A549 (cell line): ENCODE measurements at regions of chr10 and their contacts with region 1.

Region 1: DNA sequence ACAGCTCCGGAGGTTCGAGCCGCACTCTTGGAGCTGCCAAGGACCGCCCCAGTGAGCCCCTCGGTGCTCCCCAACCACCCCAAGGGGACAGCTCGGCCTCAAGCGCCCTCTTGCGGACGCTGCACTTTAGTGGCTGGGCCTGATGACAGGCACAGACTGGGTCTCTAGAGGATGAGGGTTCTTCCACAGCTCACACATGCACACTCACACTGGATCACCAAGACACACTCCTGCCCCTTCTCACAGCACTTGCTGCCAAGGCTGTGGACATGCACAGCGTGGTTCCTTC is 2.1 kb downstream of the RET start:
- DNase-seq: peak; percentile 41 to 57
- ATAC-seq: peak; percentile 25 to 70; a peak in 3 of 6 replicates
- H3K4me3 ChIP-seq: no peak overlapping the region
- H3K27ac ChIP-seq: no peak overlapping the region
- H3K4me1 ChIP-seq: 0 out of 3 replicates have a peak, but pooled peaks cover 3% of the 10 kb centered on the region
- CTCF ChIP-seq: peak; percentile 47
- EP300 ChIP-seq: no peak
- POLR2A ChIP-seq: no peak
- RAD21 ChIP-seq: peak; percentile 47 to 57; a peak in 4 of 5 replicates

Region 2: DNA sequence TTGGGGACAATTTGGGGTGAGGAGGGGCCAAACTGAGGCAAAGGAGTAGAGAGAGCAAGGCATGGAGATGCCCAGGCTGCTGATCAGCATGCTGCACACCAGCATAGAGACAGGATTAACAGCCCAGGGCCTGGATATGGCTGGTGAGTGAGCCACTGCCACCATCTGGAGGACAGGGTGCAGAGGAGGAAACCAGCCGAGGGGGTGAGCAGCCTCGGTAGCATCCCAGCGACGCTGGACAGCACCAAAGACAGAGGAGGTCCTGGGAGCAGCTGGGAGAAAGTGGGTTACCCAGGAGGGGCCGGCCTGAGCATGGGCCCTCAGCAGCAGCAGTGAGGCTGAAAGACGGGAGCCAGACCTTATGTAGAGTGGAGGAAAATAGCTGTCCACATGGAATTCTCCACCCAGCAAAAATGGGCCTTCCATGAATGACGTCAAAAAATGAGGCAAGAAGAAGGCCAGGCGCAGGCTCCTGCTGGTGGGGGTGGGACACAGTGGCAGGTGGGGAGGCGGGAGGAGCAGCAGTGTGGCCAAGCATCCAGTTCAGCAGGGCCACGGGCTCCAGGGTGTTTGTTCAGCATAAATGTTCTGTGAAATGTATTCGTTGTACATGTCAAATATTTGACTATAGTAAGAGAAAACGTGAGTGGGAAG is 14.6 kb after region 1 on chr10:
- CTCF ChIA-PET with region 1: interaction called, 17 read pairs
- POLR2A ChIA-PET with region 1: no interaction called
- DNase-seq: peak in 1 of 2 experiments; percentile 24
- ATAC-seq: peak; percentile 77 to 80
- H3K4me3 ChIP-seq: no peak overlapping the region
- H3K27ac ChIP-seq: no peak overlapping the region
- H3K4me1 ChIP-seq: no peaks in the 10 kb centered on the region
- CTCF ChIP-seq: no peak
- EP300 ChIP-seq: no peak
- POLR2A ChIP-seq: no peak
- RAD21 ChIP-seq: peak in 1 of 2 experiments; percentile 24; a peak in 2 of 5 replicates

Region 3: GRCh38 chr10:43407576-43408330 is 328.8 kb after region 1 on chr10:
- CTCF ChIA-PET with region 1: no interaction called
- POLR2A ChIA-PET with region 1: no interaction called
- DNase-seq: peak; percentile 78 to 94
- ATAC-seq: peak; percentile 60 to 67
- H3K4me3 ChIP-seq: peak overlapping the region; percentile 96
- H3K27ac ChIP-seq: peak overlapping the region; percentile 95
- H3K4me1 ChIP-seq: peaks cover 41% of the 10 kb centered on the region
- CTCF ChIP-seq: peak; percentile 27; the same call in 2 of the 3 replicates
- EP300 ChIP-seq: no peak
- POLR2A ChIP-seq: peak; percentile 70
- RAD21 ChIP-seq: no peak

Region 4: DNA sequence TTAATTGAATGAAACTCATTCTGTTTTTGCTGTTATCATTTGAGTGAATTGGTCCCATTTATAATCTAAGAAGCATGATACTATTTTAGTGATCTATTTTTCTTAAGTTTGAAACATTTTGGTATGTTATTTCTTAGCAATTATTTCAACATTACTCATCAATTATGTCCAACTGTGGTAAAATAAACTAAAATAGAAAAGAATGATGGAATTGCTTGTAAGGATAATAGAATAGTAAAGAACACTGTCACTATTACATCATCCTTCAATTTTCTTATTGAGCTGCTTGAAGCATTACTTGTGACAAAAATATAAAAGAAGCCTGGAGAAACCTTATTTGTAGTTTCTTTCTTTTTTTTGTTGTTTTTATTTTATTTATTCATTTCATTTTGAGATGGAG is 400.3 kb after region 1 on chr10:
- CTCF ChIA-PET with region 1: no interaction called
- POLR2A ChIA-PET with region 1: no interaction called
- DNase-seq: no peak
- ATAC-seq: no peak
- H3K4me3 ChIP-seq: no peak overlapping the region
- H3K27ac ChIP-seq: no peak overlapping the region
- H3K4me1 ChIP-seq: no peaks in the 10 kb centered on the region
- CTCF ChIP-seq: no peak
- EP300 ChIP-seq: no peak
- POLR2A ChIP-seq: no peak
- RAD21 ChIP-seq: no peak